ENCODE measurements at regions of chr9 and their contacts with region 1.

Region 1: DNA sequence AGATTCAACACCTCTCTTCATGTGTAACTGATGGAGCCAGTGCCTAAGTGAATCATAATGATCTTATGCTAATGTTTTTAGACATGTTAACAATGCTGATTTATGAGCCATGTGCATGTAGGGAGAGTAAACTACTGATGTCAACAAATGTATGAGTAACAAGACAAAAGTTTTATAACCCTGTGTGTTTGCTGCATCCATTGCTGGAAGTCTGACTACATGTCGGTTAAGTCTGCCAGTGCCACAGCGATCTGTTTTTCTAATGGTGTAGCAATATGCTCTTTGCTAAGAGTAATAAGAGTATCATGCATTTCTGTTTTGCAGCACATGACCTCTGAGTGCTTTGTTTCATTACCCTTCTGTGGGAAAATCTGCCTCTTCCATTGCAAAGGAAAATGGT is 26.4 kb upstream of the TMOD1 start:
- H3K4me3 ChIP-seq: no peak overlapping the region
- H3K27ac ChIP-seq: no peak overlapping the region
- H3K4me1 ChIP-seq: no peaks in the 10 kb centered on the region
- CTCF ChIP-seq: no peak

Region 2: GRCh38 chr9:97487107-97487506 is 12.0 kb after region 1 on chr9:
- CTCF ChIA-PET with region 1: interaction called, 58 read pairs
- POLR2A ChIA-PET with region 1: no interaction called
- H3K4me3 ChIP-seq: no peak overlapping the region
- H3K27ac ChIP-seq: no peak overlapping the region
- H3K4me1 ChIP-seq: no peaks in the 10 kb centered on the region
- CTCF ChIP-seq: no peak